CD14-positive monocyte (primary cell): ENCODE measurements at regions of chr11 and their contacts with region 1.

Region 1: GRCh38 chr11:70191495-70192140 is 11.5 kb upstream of the FADD start:
- DNase-seq: peak; percentile 18 to 42 (median 33)
- H3K4me3 ChIP-seq: no peak overlapping the region
- H3K4me3 Mint-ChIP-seq: peak overlapping the region in 1 of 2 donors; percentile 10
- H3K27ac ChIP-seq: no peak overlapping the region
- H3K27ac Mint-ChIP-seq: no peak overlapping the region
- H3K4me1 ChIP-seq: no peaks in the 10 kb centered on the region
- H3K4me1 Mint-ChIP-seq: peaks cover 7% of the 10 kb centered on the region
- H3K27me3 ChIP-seq: no peaks in the 10 kb centered on the region
- H3K27me3 Mint-ChIP-seq: peaks cover 9 to 17% (median 9%) of the 10 kb centered on the region in 3 donors
- CTCF ChIP-seq: peak; percentile 75

Region 2: DNA sequence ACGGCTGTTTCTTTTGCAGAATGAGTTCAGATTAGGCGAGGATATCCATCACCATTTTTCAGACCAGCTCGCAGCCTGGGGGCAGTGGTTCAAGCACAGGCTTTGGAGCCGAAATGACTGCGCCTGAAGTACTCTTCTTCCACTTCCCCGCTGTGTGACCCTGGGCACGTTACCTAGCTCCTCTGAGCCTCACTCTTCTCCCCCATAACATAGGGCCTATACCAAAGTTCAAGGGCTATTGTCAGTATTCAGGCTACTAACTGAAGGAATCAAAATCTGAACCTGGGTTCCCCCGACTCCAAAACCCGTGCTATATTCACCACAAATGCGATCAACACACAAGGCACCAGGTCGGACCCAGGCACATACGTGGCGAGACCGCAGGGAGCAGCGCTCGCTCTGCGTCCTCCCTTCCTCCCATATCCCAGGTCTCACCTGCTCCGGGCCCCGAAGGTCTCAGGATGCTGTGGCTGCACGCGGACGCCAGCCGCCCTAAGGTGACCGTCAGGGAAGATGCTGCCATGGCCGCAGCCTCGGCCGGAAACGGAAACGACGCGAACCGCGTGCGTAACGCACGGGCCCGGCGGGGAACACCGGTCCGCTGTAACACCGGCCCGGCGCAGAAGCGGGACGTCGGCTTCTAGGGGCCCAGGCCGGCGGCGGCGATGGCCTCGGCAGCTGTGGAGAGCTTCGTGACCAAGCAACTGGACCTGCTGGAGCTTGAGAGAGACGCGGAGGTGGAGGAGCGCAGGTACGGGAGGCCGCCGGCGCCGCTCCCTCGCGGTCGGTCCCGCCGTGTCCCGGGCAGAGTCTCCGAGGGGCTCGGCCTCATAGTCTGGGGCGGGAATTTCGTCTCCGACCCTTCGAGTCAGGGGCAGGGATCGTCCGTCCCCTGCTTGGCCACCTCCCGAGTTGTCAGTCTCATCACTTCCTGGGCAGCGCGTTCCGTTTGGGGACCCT is 1288.0 kb before region 1 on chr11 and contains the starts of genes IGHMBP2 and MRPL21:
- intact Hi-C with region 1: loop called in 1 of 2 experiments (anchors 10 kb)
- DNase-seq: peak; percentile 82 to 88 (median 85)
- H3K4me3 ChIP-seq: peak within 1 kb of the TSS; percentile 70 to 93 (median 84)
- H3K4me3 Mint-ChIP-seq: peak within 1 kb of the TSS; percentile 99 to 100
- H3K27ac ChIP-seq: peak within 1 kb of the TSS; percentile 48 to 87
- H3K27ac Mint-ChIP-seq: peak within 1 kb of the TSS; percentile 92 to 97 (median 94)
- H3K4me1 ChIP-seq: peaks cover 17 to 24% of the 10 kb centered on the region in 2 donors
- H3K4me1 Mint-ChIP-seq: peaks cover 36% of the 10 kb centered on the region
- H3K27me3 ChIP-seq: no peaks in the 10 kb centered on the region
- H3K27me3 Mint-ChIP-seq: peaks cover 0 to 3% (median 0%) of the 10 kb centered on the region in 3 donors
- CTCF ChIP-seq: no peak
- polyA plus RNA-seq, gene IGHMBP2: 3.9 to 14.9 (median 6.0) TPM
- polyA plus RNA-seq, gene MRPL21: 38.8 to 138 (median 104) TPM

Region 3: GRCh38 chr11:69675811-69676371 is 515.7 kb before region 1 on chr11:
- intact Hi-C with region 1: loop called (anchors 5 to 10 kb)
- DNase-seq: no peak
- H3K4me3 ChIP-seq: peak overlapping the region in 2 of 3 experiments; percentile 84 to 85
- H3K4me3 Mint-ChIP-seq: peak overlapping the region; percentile 90 to 93
- H3K27ac ChIP-seq: no peak overlapping the region
- H3K27ac Mint-ChIP-seq: peak overlapping the region in 2 of 7 donors; percentile 92 to 95
- H3K4me1 ChIP-seq: peaks cover 14 to 24% of the 10 kb centered on the region in 2 donors
- H3K4me1 Mint-ChIP-seq: peaks cover 20% of the 10 kb centered on the region
- H3K27me3 ChIP-seq: peaks cover 0 to 7% of the 10 kb centered on the region in 2 donors
- H3K27me3 Mint-ChIP-seq: peaks cover 7 to 26% (median 14%) of the 10 kb centered on the region in 3 donors
- CTCF ChIP-seq: no peak

Region 4: DNA sequence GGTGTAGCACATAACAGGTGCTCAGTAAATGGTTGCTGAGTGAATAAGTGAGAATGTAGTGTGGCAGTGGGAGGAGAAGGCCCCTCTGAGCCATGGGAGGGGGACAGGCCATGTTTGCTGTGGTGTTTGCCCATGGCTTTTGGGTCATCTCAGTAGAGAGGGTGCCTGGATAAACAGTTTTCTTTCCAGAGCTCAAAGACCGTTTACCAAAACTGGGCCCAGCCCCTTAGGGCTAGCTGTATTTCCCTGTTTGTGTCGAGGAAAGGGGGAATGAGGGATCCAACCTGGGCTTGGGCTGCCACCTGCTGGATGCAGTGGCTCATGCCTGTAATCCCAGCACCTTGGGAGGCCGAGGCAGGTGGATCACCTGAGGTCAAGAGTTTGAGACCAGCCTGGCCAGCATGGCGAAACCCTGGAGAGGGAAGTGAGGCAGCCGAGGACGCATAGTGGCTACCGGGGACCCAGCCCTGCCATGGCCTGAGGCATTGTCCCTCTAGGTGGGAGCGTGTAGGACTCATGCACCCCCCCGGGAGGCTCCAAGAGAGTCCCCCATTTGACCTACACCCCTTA is 507.8 kb before region 1 on chr11:
- intact Hi-C with region 1: loop called (anchors 5 to 10 kb)
- DNase-seq: no peak
- H3K4me3 ChIP-seq: no peak overlapping the region
- H3K4me3 Mint-ChIP-seq: no peak overlapping the region
- H3K27ac ChIP-seq: no peak overlapping the region
- H3K27ac Mint-ChIP-seq: no peak overlapping the region
- H3K4me1 ChIP-seq: peaks cover 3 to 4% of the 10 kb centered on the region in 2 donors
- H3K4me1 Mint-ChIP-seq: peaks cover 8% of the 10 kb centered on the region
- H3K27me3 ChIP-seq: peaks cover 4 to 21% of the 10 kb centered on the region in 2 donors
- H3K27me3 Mint-ChIP-seq: peaks cover 27 to 43% (median 35%) of the 10 kb centered on the region in 3 donors
- CTCF ChIP-seq: peak; percentile 10

Region 5: DNA sequence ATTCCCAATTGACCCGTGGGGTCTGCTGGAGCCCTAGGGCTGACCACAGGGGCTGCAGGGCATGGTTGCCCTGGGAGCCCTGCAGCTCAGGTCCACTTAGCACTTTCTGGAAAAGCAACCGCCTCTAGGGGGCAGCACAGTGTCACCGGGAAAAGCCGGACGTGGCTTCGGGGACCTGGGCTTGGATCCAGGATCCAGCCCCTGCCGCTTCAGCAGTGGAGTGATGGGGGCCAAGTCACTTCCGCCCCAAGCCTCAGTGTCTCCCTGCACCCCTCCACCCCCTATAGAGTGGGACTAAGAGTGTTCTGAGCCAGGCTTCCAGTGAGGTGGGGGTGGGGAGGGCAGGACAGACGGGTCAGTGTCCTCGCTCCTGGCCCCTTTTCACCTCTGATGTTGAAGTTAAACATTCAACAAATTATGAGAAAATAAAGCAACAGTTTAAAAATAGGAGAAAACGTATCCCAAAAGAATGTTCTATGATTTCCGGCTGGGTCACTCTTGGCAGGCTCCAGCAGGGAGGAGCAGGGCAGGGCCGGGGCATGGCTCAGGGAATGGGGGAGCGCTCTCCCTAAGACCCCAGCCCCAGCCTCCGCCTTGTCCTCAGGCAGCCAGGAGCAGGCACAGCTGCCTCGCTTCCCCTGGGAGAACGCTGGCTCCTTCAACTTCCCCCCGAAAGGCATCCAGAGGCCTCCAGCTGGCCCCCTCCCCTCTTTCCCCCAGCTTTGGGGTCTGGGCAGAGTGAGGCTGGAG is 275.9 kb before region 1 on chr11:
- intact Hi-C with region 1: loop called (anchors 2 to 5 kb)
- DNase-seq: peak; percentile 11 to 23 (median 14)
- H3K4me3 ChIP-seq: no peak overlapping the region
- H3K4me3 Mint-ChIP-seq: no peak overlapping the region
- H3K27ac ChIP-seq: no peak overlapping the region
- H3K27ac Mint-ChIP-seq: peak overlapping the region in 1 of 7 donors; percentile 69
- H3K4me1 ChIP-seq: no peaks in the 10 kb centered on the region
- H3K4me1 Mint-ChIP-seq: no peaks in the 10 kb centered on the region
- H3K27me3 ChIP-seq: peaks cover 0 to 6% of the 10 kb centered on the region in 2 donors
- H3K27me3 Mint-ChIP-seq: peaks cover 15 to 31% (median 27%) of the 10 kb centered on the region in 3 donors
- CTCF ChIP-seq: peak; percentile 77